Mucosa of descending colon (tissue), 3 donors: ENCODE measurements at regions of chr6 and their contacts with region 1.

Region 1: DNA sequence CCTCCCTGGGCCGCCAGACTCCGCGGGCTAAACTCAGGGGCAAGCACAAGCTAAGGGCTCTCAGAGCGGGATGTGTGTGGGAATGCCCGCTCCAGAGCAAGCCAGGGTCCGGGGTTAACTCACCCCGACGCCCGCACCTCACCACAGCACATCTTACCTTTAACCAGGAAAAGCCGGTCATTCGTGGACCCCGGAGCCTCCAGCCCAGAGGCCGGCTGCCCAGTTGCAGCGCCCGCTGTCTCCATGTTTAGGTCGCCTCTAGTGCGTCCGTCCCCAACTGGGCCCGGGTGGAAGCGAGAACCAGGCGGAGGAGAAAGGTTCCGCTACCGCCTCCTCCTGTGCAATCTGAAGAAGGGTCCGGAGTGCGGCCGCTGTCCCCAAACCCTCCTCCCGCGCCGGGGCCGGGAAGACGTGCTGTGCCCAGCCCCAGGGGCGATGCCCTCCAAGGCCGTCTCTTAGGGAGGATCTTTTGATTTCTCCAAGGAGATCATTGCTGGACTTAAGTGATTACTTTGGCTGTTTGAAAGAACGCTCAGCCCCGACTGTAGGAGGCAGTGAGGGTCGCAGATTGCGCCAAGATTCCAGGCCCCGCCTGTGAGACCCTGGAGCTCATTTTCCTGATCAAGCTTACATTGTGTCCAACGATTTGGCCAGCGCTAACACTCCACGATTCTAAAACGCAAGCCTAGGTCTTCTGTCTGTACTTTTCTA is at the start of gene TMEM242:
- DNase-seq: peak; percentile 93 to 96 (median 94)
- ATAC-seq: peak; percentile 98
- H3K4me3 ChIP-seq: peak within 1 kb of the TSS; percentile 41
- H3K4me1 ChIP-seq: peaks cover 16% of the 10 kb centered on the region
- CTCF ChIP-seq: peak; percentile 21
- total RNA-seq, gene TMEM242: 10.0 to 14.1 (median 13.4) TPM

Region 2: DNA sequence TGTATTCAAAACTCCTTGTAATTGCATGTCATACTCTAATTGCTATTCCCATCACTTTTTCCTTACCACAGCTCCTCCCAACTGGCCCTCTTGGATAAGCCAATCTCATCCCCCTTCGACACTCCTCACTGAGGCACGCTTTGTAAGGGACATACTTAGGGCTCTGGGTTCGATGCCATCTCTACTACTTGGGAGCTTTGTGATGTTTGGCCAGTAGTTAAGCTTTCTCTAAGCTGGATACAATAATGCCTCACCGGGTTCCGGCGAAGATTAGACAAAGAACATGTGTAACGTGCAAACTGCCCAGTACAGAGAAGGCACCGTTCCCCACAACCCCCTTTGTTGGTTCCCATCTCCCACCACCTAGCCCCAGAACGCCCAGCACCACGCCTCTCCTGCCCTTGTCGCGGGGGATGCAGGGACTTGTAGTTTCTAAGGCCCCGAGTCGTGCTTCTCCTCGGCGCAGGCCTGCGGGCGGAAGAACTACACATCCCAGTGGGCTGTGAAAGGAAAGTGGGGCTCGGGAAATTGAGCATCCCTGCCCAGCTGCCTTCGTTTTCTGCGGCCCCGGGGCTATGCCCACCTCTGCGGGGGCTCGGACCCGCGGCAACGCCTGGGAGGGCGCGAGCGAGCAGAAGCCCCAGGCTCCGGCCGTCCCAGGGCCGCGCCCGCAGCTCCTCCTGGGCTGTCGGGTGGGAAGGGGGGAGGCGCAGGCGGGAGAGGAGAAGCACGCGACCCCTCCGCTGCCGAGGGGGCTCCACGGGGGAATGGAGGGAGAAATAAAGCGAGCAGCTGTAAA is 56.4 kb after region 1 on chr6:
- intact Hi-C with region 1: loop called in 1 of 2 experiments (anchors 5 kb)
- DNase-seq: peak; percentile 90 to 94 (median 92)
- ATAC-seq: peak; percentile 84
- H3K4me3 ChIP-seq: peak overlapping the region; percentile 97
- H3K4me1 ChIP-seq: peaks cover 6% of the 10 kb centered on the region
- CTCF ChIP-seq: no peak

Region 3: DNA sequence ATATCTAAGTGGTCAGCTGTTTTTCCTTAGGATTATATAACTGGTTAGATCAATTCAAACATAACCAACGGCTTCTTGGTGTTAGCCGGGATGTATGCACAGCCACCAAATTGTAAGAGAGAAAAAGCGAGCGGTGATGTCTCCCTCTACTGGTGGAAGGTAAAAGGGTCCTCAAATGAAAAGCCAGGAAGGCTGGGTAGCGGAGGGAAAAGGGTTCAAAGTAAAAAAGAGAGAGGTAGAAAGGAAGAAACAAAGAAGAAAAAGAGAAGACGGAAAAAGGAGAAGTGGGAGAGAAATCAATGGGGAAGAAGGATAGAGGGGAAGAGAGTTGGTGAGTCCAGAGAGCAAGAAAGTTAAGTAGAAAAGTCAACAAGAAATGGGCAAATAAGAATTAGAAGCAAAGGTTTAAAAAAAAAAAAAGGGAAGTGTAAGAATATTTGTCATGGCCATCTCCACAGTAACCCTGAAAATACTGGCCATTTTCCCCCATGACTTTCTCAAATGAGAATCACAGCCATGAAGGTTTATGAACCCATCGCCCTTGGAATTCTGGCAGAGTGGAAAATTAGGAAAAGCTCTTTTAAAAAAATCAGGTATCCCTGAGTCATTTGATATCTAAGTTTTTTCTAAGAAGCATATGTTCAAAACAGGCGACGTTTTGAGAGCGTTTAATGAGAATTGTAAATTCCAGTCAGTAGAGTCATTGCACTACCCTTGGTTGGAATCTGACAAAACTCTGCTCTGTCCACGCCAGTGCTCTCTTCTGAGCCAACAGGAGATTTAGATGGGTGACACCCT is 344.0 kb after region 1 on chr6:
- intact Hi-C with region 1: loop called (anchors 5 to 10 kb)
- DNase-seq: peak in 1 of 3 donors; percentile 78
- ATAC-seq: peak; percentile 75
- H3K4me3 ChIP-seq: no peak overlapping the region
- H3K4me1 ChIP-seq: peaks cover 11% of the 10 kb centered on the region
- CTCF ChIP-seq: peak; percentile 65